ENCODE measurements at regions of chr7 and their contacts with region 1.

Region 1: GRCh38 chr7:19248681-19249080 is 103.5 kb upstream of the FERD3L start:
- DNase-seq: no peak
- ATAC-seq: no peak

Region 2: DNA sequence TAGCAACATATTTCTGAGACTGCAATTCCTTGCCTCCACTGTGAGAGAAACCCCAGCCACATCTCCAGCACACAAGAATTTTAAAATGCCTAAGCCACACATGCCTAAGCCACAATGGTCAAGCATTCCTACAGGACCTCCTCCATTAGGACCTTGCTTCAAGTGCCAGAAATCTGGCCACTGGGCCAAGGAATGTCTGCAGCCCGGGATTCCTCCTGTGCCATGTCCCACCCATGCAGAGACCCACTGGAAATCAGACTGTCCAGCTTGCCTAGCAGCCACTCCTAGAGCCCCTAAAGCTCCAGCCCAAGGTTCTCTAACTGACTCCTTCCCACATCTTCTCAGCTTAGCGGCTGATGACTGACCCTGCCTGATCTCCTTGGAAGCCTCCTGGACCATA is 1832.7 kb before region 1 on chr7:
- intact Hi-C with region 1: loop called (anchors 5 kb)
- DNase-seq: no peak
- ATAC-seq: no peak

Region 3: DNA sequence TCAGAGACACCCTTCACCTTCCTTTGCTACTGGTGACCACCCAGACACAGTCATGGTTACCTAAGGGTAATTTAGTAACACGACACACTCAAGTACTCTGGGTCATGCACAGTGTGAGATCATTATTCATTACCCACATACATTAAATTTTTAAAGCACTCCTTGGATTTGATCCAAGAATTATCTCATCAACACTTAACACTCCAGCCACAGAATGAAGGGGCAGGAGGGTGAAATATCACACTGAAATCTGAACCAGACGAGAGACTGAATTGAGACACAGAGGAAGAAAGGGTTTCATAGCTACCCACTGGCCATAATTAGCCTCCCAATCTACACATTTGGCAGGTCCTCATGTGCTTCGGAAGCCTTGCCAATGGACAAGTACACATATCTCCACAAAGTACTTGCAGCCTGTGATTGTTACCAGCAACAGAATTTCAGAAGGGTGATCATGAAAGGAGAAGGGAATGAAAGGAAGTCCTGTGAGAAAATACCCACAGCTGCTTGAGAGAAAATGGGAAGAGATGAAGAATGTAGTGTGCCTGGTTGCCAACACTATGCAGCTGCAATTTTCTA is 270.9 kb after region 1 on chr7:
- intact Hi-C with region 1: no loop called
- DNase-seq: no peak
- ATAC-seq: no peak